ENCODE measurements at regions of chr7 and their contacts with region 1.

Region 1: GRCh38 chr7:55641273-55641691 is 69.0 kb upstream of the VOPP1 start:
- DNase-seq: peak; percentile 83
- H3K4me3 ChIP-seq: no peak overlapping the region
- H3K27ac ChIP-seq: no peak overlapping the region
- H3K4me1 ChIP-seq: peaks cover 6% of the 10 kb centered on the region
- H3K27me3 ChIP-seq: peaks cover 0 to 3% of the 10 kb centered on the region in 2 experiments
- CTCF ChIP-seq: peak; percentile 53 to 63
- POLR2A ChIP-seq: no peak

Region 2: DNA sequence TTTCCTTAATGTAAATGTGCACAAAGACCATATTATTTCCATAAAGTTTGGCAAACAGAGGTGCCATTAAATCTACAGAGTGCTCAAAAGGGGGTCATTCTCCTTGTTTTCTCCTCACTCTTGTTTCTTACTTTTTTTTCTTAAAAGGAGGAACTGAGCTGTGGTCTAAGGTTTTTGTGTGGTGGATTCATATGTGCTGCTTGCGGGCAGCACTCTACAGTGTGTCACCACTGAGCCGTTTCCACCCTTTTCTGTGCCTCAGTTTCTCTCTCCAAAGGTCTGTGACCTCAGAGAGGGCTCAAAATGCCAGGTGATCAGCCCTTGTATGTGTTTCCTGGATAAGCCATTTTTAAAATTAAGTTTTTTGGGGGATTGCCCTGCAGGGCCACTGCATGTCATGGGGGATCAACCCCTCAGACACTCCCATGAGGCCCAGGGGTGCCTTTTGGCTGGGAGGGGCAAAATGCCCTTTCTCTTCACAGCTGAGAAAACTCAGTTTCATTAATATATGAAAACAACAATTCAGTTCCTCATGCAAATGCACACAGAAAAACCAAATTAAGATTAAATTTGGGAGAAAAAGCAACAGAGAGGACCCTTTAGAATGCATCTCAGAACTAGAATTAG is 12.1 kb before region 1 on chr7:
- CTCF ChIA-PET with region 1: interaction called, 12 read pairs
- POLR2A ChIA-PET with region 1: no interaction called
- dilution Hi-C with region 1: no loop called
- intact Hi-C with region 1: no loop called
- DNase-seq: no peak
- H3K4me3 ChIP-seq: no peak overlapping the region
- H3K27ac ChIP-seq: no peak overlapping the region
- H3K4me1 ChIP-seq: no peaks in the 10 kb centered on the region
- H3K27me3 ChIP-seq: no peaks in the 10 kb centered on the region
- CTCF ChIP-seq: no peak
- POLR2A ChIP-seq: no peak

Region 3: GRCh38 chr7:55723621-55723941 is 82.3 kb after region 1 on chr7:
- CTCF ChIA-PET with region 1: interaction called, 16 read pairs
- POLR2A ChIA-PET with region 1: interaction called, 6 read pairs
- dilution Hi-C with region 1: no loop called
- intact Hi-C with region 1: no loop called
- DNase-seq: no peak
- H3K4me3 ChIP-seq: no peak overlapping the region
- H3K27ac ChIP-seq: no peak overlapping the region
- H3K4me1 ChIP-seq: no peaks in the 10 kb centered on the region
- H3K27me3 ChIP-seq: no peaks in the 10 kb centered on the region
- CTCF ChIP-seq: no peak
- POLR2A ChIP-seq: no peak